Calu3 (cell line): ENCODE measurements at regions of chr12 and their contacts with region 1.

Region 1: DNA sequence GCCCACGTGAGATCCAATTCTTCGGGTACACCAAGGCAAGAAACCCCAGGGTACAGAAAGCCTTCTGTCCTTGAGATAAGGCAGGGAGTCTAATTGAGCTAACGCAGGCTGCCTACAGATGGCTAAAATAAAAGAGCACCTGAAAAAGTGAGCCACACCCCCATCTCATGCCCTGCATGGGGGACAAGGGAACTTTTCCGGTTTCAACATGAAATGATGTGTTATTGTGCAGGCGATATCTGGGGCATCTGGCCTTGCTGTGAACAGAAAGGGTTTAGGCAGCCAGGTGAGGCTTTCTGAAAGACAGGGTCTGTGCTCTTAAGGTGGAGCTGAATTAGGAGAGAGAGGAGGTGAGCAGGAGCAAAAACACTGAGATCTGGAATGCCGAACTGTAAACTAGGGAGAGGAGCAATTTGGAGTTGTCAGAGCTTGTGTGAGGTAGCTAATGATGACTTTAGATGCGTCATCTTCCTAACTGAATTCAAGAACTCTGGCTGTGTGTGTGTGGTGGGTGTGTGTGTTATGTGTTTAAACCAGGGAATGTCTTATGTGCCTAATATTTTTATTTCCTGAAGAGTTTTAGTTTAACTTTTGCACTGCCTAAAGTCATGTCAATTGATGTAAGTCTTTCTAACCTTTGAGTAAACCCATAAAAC is 20.1 kb upstream of the LDHB start:
- DNase-seq: no peak
- H3K4me3 Mint-ChIP-seq: no peak overlapping the region
- H3K27ac Mint-ChIP-seq: no peak overlapping the region
- H3K4me1 Mint-ChIP-seq: no peaks in the 10 kb centered on the region
- H3K27me3 Mint-ChIP-seq: peaks cover 2% of the 10 kb centered on the region
- CTCF ChIP-seq: no peak

Region 2: DNA sequence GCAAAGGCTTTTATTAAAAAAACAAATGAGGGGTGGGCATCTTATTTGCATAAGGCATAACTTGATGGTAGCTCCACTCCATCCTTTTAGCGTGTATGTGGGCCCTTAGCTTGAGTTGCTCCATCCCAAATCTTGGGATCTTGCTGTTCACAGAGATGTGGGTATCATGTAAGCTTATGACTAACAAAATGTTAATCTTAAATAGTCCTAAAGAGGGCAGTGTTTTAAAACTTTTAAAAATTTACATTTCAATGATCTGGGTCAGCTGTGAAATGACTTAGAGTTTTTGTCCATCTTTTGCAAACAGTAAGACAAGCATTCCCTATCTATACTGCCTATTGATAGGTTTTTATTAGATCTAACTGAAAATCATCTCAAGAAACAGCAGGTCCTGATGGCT is 429.1 kb before region 1 on chr12:
- CTCF ChIA-PET with region 1: interaction called, 3 read pairs
- intact Hi-C with region 1: loop called (anchors 2 kb)
- DNase-seq: no peak
- H3K4me3 Mint-ChIP-seq: no peak overlapping the region
- H3K27ac Mint-ChIP-seq: no peak overlapping the region
- H3K4me1 Mint-ChIP-seq: no peaks in the 10 kb centered on the region
- H3K27me3 Mint-ChIP-seq: no peaks in the 10 kb centered on the region
- CTCF ChIP-seq: no peak

Region 3: DNA sequence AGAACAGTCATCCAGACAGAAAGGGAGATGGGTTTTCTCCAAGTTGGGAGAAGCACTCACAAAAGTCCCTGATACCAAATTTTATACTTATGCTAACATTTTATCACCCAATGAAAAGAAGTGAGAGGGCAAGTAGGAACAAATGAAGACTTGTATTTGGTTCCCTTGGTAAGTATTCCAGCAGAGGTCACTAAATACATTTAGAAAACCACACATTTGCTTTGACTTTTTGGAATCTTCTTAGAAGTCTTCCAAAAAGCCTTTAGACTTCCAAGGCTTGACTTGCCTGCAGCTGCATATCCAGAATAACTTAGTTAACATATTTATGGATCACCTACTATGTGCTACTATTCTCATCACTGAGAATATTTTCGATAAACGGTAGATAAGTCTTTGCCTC is 70.0 kb before region 1 on chr12:
- CTCF ChIA-PET with region 1: interaction called, 5 read pairs
- intact Hi-C with region 1: loop called (anchors 1 kb)
- DNase-seq: no peak
- H3K4me3 Mint-ChIP-seq: no peak overlapping the region
- H3K27ac Mint-ChIP-seq: no peak overlapping the region
- H3K4me1 Mint-ChIP-seq: no peaks in the 10 kb centered on the region
- H3K27me3 Mint-ChIP-seq: no peaks in the 10 kb centered on the region
- CTCF ChIP-seq: no peak

Region 4: DNA sequence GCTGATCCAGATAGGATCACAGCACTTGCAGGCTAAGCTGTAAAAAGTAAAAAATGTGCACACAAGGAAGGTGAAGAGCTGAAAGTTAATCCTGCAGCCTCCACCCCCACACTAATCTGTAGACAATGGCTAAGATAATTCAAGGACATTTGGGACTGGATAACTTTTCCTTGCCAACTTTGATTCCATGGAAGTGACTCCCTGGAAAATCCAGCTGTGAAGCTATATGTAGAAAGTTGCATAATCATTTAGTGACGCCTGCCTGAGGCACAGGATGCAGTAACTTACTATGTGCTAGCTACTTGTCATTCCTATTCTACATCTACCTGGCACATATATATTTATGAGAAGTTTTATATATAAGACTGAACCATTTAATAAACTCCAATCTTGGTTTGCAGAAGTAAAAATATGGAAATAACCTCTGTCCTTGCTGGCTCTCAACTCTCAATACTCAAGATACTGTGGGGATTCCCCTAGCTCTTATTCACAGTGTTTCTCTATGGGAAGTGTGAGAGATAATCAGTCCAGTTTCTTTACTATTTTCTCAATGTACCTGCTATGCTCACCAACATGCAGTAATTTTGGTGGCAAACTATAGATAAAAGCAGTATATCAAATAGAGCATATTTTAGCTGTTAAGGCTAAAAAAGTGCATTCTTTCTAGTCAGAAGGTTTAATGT is 34.9 kb before region 1 on chr12:
- CTCF ChIA-PET with region 1: interaction called, 5 read pairs
- intact Hi-C with region 1: loop called (anchors 2 kb)
- DNase-seq: no peak
- H3K4me3 Mint-ChIP-seq: no peak overlapping the region
- H3K27ac Mint-ChIP-seq: no peak overlapping the region
- H3K4me1 Mint-ChIP-seq: peaks cover 83% of the 10 kb centered on the region
- H3K27me3 Mint-ChIP-seq: no peaks in the 10 kb centered on the region
- CTCF ChIP-seq: no peak